Activated T-helper 1 cell treated with anti-CD3 and anti-CD28 coated beads, Interleukin-12 subunit alpha, Interleukin-12 subunit beta, Interleukin-2, Interleukin-4 antibody, amounts not matched to agents 30 ng/mL and 10 ng/mL and 1 ng/mL, durations not matched to agents 14 hours and 24 hours and 36 hours (primary cell): ENCODE measurements at regions of chr9 and their contacts with region 1.

Region 1: DNA sequence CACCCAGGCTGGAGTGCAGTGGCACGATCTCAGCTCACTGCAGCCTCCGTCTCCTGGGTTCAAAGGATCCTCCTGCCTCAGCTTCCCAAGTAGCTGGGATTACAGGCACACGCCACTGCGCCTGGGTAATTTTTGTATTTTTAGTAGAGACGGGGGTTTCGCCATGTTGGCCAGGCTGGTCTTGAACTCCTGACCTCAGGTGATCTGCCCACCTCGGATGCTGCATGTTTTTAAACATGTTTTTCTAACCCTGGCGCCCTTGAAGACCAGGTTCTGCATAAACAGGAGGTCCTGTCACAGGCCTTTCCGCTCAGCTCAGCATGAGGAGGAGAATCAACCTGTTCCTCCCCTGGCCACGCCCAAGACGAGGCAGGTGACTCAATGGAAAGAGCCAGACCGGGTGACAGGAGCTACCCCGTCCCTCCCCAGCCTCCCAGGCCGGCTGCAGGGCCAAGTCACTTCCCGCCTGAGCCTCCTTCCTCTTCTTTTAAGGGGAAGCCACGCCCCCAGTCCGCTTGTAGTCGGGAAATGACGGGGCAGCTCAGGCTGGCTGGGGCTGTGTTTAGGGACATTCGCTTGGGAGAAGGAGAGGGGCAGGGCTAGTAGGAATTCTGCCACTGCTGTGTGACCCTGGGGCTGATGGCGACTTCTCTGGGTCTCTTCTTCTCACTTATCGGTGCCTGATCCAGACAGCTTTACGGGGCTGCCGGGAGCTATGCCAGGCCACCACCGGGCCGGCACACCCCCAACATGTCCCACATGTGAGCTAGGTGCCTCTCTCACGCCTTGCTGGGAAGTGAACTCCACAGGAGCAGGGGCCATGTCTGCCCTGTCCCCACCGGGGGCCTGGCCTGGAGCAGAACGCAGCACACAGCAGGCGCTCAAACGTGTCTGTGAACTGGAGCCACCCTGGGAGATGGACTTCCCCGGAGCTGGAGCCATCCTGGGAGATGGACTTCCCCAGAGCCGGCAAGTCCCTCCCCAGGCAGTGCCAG is 6.1 kb downstream of the NOTCH1 start:
- DNase-seq: peak; percentile 91
- H3K4me3 Mint-ChIP-seq: peak overlapping the region; percentile 93
- H3K27ac Mint-ChIP-seq: peak overlapping the region; percentile 100
- H3K4me1 Mint-ChIP-seq: peaks cover 34% of the 10 kb centered on the region
- H3K27me3 Mint-ChIP-seq: no peaks in the 10 kb centered on the region

Region 2: DNA sequence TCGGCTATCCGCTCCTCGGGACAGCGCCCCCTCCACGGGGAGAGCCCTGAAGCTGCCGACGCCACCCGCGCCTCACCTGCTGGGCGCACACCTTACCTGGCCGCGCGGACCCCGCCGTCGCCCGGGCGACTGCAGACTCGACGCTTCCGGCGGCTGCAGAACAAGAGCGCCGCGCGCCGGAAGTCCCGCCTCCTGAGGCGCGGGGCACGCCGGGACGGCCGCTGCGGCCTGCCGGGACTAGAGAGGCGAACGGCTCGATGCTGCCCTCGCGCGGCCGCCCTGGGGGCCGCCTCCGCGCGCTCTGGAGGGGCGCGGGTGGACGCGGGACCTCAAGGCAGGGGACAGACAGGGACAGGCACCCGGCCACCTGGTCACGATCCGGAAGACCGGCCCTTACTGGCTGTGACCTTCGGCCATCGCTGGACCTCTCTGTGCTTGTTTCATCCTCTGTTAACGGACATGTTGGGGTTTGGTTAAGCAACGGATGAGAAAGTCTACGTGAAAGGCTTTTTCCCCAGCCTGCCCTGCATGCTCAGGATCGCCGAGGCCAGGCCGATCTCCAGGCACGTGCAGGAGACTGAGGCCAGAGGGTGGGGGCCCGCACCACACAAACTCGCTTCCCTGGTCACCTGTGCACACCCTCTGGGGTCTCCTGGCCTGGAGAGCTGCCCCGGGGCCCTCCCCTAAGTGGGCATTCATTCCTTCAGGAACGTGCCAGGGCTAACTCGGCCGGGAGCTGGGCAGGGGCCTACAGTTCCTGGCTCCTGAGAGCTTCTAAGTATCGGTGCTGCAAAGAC is 139.5 kb before region 1 on chr9 and contains the start of gene SNAPC4:
- intact Hi-C with region 1: loop called (anchors 2 kb)
- DNase-seq: peak; percentile 86
- H3K4me3 Mint-ChIP-seq: peak within 1 kb of the TSS; percentile 91
- H3K27ac Mint-ChIP-seq: peak within 1 kb of the TSS; percentile 76
- H3K4me1 Mint-ChIP-seq: peaks cover 40% of the 10 kb centered on the region
- H3K27me3 Mint-ChIP-seq: no peaks in the 10 kb centered on the region
- total RNA-seq, gene SNAPC4: 26.7 TPM in 2 replicates

Region 3: DNA sequence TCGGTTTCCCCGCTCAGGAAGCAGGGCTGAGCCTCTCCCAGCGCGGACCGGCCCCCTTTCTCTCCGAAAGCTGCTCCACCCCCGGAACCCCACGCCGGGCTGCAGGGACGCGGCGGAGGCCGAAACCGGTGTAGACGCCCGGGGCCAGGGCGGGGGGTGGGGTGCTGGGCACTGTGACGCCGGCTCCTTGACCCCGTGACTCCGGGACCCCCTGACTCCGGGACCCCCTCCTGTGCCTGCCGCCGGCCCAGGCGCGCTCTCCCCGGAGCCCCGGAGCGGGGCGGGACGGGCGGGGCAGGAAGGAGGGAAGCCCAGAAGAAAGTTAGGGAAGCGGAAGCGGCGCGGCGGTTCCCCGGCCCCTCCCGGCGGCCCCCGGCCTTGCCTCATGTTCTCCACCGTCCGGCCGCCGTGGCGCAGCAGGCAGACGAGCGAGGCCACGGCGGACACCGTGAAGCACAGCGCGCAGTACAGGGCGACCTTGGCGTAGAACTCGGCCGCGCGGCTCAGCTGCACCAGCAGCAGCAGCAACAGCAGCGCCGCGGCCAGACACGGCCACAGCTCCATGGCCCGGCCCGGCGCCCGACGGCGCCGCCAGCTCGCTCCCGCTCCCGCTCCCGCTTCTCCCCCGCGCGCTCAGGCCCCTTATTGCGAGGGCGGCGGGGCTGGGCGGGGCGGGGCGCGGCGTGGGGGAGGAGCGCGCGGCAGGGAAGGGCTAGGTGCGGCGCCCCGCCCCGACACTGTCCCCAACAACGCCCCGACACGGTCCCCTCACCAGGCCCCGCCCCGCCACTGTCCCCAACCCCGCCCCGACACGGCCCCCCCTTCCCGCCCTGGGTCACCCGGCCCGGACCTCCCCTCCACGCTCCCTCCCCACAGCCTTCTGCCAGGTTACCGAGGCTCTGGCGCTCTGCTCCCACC is 147.3 kb after region 1 on chr9 and contains the start of gene AGPAT2:
- intact Hi-C with region 1: loop called (anchors 1 kb)
- DNase-seq: peak; percentile 40
- H3K4me3 Mint-ChIP-seq: peak within 1 kb of the TSS; percentile 80
- H3K27ac Mint-ChIP-seq: no peak within 1 kb of the TSS
- H3K4me1 Mint-ChIP-seq: no peaks in the 10 kb centered on the region
- H3K27me3 Mint-ChIP-seq: peaks cover 3% of the 10 kb centered on the region
- total RNA-seq, gene AGPAT2: 24.7 and 25.0 TPM in 2 replicates

Region 4: DNA sequence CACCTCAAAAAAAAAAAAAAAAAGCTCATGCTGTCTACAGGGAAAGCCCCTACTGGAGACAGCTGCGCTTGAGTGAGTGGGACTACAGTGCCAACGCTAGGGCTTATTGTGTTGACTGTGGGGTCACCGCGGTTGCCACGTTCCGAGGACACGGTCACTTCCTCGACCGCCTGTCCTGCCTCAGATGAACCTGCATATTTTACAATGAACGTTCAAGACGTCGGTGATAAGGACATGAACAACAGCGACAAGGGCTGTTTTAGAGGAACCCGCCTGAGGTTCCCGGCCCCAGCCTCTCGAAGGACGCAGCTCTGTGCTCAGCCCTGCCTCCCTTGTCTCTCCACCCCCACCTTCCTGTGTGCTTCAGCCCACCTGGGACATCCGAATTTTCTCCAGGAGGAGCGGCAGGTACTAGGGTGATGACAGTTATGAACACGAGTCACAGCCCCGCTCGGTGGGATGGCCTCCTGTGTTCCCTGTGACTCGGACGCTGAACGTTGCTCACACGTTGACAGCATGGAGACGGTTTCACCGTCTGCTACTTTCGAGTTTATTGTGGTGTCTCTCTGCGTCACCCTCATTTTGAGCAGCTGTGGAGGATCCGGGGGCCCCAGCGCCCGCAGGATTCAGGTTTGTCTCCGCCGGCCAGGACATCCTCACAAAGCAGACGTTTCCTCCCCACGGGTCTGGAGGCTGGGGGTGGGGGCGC is 161.4 kb after region 1 on chr9:
- intact Hi-C with region 1: loop called (anchors 1 kb)
- DNase-seq: peak; percentile 54
- H3K4me3 Mint-ChIP-seq: peak overlapping the region; percentile 77
- H3K27ac Mint-ChIP-seq: peak overlapping the region; percentile 95
- H3K4me1 Mint-ChIP-seq: peaks cover 20% of the 10 kb centered on the region
- H3K27me3 Mint-ChIP-seq: peaks cover 36% of the 10 kb centered on the region

Region 5: DNA sequence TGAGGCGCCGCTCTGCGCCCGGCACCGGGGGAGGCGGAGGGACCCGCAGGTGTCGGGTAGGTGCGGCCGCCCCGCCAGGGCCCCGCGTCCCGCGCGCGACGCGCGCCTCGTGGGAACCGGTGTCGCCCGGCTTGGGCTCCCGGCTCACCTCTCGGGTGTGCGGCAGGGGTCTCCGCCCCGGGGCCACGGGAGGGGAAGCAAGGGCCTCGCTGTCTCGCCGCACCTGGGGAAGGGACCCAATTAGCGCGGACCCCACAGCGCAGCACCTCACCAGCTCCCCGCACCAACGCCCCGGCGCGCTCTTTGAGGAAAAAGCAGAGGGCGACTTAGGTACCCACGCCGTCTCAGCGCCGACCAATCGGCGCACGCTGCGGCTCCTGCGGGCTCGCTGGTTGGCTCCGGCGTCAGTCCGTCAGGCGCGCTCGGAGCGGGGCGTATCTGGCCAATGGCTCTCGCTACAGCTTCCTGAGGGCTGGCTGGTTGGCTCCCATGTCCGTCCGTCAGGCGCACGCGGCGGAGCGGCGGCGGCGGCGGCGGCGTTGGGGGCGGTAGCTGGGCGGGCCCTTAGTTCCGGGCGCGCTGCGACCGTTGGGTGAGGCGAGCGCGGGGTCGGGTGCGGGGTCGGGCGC is 346.3 kb after region 1 on chr9 and contains the start of gene TRAF2:
- intact Hi-C with region 1: loop called (anchors 5 kb)
- DNase-seq: peak; percentile 99
- H3K4me3 Mint-ChIP-seq: peak within 1 kb of the TSS; percentile 98
- H3K27ac Mint-ChIP-seq: peak within 1 kb of the TSS; percentile 93
- H3K4me1 Mint-ChIP-seq: peaks cover 44% of the 10 kb centered on the region
- H3K27me3 Mint-ChIP-seq: no peaks in the 10 kb centered on the region
- total RNA-seq, gene TRAF2: 67.4 and 76.3 TPM in 2 replicates